Upper lobe of right lung (tissue), 1 donor: ENCODE measurements at regions of chr10 and their contacts with region 1.

Region 1: DNA sequence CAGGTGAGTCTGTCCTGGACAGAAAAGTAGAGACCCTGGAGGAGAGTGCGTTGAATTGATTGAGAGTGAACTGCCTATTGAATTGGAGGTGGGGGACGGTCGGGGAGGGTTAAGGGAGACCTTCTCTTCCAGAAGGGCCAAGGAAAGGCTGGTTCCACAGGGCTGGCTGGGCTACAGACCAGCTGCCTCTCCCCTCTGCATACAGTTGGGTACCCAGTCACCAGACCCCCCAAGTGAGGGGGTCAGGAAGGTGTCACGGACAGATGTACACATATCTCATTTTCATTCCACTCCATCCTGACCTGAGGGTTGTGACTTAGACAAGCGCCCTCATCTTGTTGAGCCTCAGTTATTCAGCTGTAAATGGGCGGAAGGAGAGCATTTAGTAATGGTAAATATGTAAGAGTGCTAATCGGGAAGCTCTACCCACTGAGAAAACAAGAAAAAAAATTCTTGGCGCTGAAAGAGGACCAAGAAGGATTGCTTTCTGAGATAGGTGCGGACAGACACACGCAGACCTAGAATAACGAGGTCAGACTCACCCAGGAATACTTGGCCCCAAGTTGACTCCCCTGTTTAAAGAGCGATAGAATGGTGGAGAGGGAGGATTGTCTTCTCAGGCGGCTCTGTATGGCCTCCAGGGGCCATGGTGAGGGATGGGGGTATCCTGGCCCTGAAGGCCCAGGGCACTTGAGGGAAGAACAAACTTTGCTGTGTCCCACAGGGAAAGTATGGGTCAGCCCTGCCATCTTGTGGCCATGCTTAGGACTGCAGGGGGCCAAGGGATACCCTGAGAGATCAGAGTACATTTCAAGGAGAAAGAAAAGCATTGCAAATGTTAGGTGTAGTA is 7.2 kb upstream of the MBL2 start:
- DNase-seq: peak; percentile 77
- ATAC-seq: peak; percentile 86
- H3K4me3 ChIP-seq: no peak overlapping the region
- H3K27ac ChIP-seq: no peak overlapping the region
- H3K4me1 ChIP-seq: no peaks in the 10 kb centered on the region
- H3K27me3 ChIP-seq: peaks cover 7% of the 10 kb centered on the region
- CTCF ChIP-seq: peak; percentile 89

Region 2: GRCh38 chr10:52740913-52741675 is 38.7 kb before region 1 on chr10:
- intact Hi-C with region 1: loop called (anchors 5 kb)
- DNase-seq: no peak
- ATAC-seq: peak; percentile 76
- H3K4me3 ChIP-seq: no peak overlapping the region
- H3K27ac ChIP-seq: no peak overlapping the region
- H3K4me1 ChIP-seq: no peaks in the 10 kb centered on the region
- H3K27me3 ChIP-seq: no peaks in the 10 kb centered on the region
- CTCF ChIP-seq: peak; percentile 92